Activated CD4-positive, alpha-beta memory T cell treated with anti-CD3 and anti-CD28 coated beads for 36 hours (primary cell): ENCODE measurements at regions of chr10 and their contacts with region 1.

Region 1: GRCh38 chr10:104291439-104291951 is 22.5 kb downstream of the GSTO2 start:
- DNase-seq: peak; percentile 92
- H3K4me3 Mint-ChIP-seq: peak overlapping the region; percentile 39
- H3K27ac Mint-ChIP-seq: no peak overlapping the region
- H3K4me1 Mint-ChIP-seq: peaks cover 12% of the 10 kb centered on the region
- H3K27me3 Mint-ChIP-seq: peaks cover 23% of the 10 kb centered on the region

Region 2: GRCh38 chr10:104231784-104232612 is 59.5 kb before region 1 on chr10 and contains the start of gene CFAP43:
- CTCF ChIA-PET with region 1: no interaction called
- POLR2A ChIA-PET with region 1: no interaction called
- intact Hi-C with region 1: no loop called
- DNase-seq: peak; percentile 99
- H3K4me3 Mint-ChIP-seq: peak within 1 kb of the TSS; percentile 80
- H3K27ac Mint-ChIP-seq: peak within 1 kb of the TSS; percentile 4
- H3K4me1 Mint-ChIP-seq: peaks cover 11% of the 10 kb centered on the region
- H3K27me3 Mint-ChIP-seq: peaks cover 11% of the 10 kb centered on the region
- total RNA-seq, gene CFAP43: 0.19 to 0.22 TPM

Region 3: DNA sequence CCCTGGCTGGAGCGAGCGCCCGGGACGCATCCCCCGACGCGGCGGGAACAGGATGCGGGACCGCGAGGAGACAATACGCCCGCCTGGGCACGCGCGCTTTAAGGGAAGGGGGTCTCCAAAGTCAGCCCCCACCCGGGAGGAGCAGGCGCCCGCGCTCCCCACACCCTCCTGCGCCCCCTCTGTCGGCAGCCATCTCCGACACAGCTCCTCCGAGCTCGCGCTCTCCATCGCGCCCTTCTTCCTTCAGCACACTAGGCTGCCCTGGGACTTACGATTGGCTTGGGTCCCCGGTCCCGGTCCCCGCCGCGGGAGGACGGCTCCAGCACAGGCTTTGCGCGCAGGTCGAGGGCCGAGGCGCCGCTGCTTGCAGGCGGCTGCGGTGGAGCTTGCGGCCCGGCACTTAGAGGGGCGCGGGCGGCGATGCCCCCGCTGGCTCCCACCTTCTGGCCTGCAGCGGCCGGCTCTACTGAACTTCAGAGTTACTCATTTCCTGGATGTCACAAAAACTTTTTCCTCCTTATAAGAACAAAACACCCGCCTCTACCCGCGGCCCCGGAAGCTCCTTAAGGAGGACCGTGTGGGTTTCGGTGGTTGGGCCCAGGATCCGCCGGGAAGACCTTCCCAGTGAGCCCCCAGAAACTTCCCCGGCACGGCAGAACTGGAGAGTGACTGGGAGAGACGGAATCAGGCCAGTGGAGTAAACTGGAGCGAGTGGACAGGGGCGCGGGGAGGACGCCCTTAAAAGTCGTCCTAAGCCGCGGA is 46.7 kb after region 1 on chr10 and contains the start of gene ITPRIP:
- CTCF ChIA-PET with region 1: interaction called, 45 read pairs
- POLR2A ChIA-PET with region 1: interaction called, 3 read pairs
- intact Hi-C with region 1: loop called (anchors 5 kb)
- DNase-seq: peak; percentile 81
- H3K4me3 Mint-ChIP-seq: peak within 1 kb of the TSS; percentile 82
- H3K27ac Mint-ChIP-seq: peak within 1 kb of the TSS; percentile 90
- H3K4me1 Mint-ChIP-seq: peaks cover 48% of the 10 kb centered on the region
- H3K27me3 Mint-ChIP-seq: no peaks in the 10 kb centered on the region
- total RNA-seq, gene ITPRIP: 15.6 to 16.6 TPM

Region 4: GRCh38 chr10:104622598-104623209 is 331.2 kb after region 1 on chr10:
- CTCF ChIA-PET with region 1: no interaction called
- POLR2A ChIA-PET with region 1: no interaction called
- intact Hi-C with region 1: loop called (anchors 5 kb)
- DNase-seq: peak; percentile 26
- H3K4me3 Mint-ChIP-seq: no peak overlapping the region
- H3K27ac Mint-ChIP-seq: no peak overlapping the region
- H3K4me1 Mint-ChIP-seq: no peaks in the 10 kb centered on the region
- H3K27me3 Mint-ChIP-seq: peaks cover 24% of the 10 kb centered on the region